WTC11 (cell line): ENCODE measurements at regions of chr15 and their contacts with region 1.

Region 1: DNA sequence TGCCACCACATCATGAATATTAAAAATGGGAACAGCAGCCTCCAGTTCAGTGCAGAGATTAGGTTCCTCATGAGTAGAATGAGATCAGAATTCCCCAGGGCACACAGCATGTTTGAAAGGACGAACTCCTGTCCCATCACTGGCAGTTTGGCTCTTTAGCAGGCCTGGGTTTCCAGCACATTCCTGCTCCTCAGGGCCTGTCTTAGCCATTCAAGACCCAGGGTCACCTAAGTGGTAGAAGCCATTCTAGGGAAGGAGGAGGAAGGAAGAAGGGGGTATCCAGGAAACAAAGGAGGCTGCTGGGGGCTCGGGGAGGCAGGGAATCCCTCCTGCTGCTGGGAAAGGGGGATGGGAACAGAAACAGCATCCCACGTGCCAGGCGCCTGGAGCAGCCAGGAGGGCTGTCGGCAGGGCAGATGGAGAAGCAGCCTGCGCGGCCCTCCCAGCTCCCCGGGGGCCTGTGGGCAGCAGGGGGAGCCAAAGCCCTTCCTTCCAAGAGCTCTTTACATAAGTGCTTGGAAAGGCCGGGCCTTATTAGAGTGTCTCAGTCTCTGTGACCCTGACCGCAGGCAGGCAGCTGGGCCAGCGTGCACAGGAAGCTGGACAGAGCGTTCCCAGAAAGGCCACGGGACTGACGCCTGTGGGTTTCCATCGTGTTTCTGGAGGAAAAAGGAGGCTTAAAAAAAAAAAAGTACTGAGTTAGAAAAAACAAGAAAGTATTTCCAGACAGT is 24.7 kb downstream of the LOXL1 start:
- DNase-seq: peak; percentile 91
- ATAC-seq: peak; percentile 93
- H3K4me3 Mint-ChIP-seq: no peak overlapping the region
- H3K27ac Mint-ChIP-seq: peak overlapping the region; percentile 97
- H3K4me1 Mint-ChIP-seq: peaks cover 10% of the 10 kb centered on the region
- H3K27me3 Mint-ChIP-seq: peaks cover 3% of the 10 kb centered on the region; the same call in 1 of the 2 replicates
- CTCF ChIP-seq: peak; percentile 37; the same call in 1 of the 2 replicates

Region 2: DNA sequence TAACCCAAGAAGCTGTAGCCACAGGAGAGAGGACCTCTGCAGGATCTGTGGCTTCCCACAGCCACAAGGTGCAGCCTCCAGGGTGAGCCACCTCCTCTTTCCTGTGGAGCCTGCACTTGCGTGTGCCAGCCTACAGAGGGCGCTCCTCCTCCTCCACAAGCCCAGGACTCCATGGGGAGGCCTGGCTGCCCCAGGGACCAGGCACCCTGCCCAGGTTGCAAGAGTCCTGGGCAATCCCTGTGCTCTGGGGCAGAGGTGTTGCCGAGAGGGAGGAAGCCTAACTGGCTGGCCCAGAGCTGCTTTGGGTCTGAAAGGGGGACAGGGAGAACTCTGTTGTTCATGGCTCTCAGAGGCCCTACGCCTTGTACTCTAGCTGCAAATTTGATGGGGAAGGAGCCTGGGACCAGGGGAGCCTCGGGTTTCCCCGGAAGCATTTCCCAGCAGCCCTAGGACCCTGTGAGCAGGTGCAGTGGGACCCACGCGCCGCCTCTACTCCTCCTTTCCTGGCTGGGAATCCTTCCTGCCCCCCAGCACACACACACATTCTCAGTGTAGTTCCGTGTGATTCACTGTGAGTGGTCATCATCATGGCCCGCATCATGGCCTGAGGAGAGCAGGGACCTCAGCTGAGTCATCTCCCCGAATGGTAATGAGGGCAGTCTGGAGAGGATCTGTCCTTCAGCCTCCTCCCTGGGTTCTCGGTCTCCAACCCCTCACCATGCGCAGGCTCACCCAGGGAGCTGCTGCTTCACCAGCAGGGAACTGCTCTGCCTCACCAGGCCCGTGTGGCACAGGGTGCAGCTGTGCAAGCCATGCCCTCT is 53.3 kb before region 1 on chr15:
- CTCF ChIA-PET with region 1: interaction called, 11 read pairs
- POLR2A ChIA-PET with region 1: no interaction called
- DNase-seq: peak; percentile 78
- ATAC-seq: peak; percentile 92
- H3K4me3 Mint-ChIP-seq: no peak overlapping the region
- H3K27ac Mint-ChIP-seq: no peak overlapping the region
- H3K4me1 Mint-ChIP-seq: peaks cover 14% of the 10 kb centered on the region
- H3K27me3 Mint-ChIP-seq: no peaks in the 10 kb centered on the region
- CTCF ChIP-seq: peak; percentile 99

Region 3: GRCh38 chr15:73936181-73936580 is 14.8 kb before region 1 on chr15:
- CTCF ChIA-PET with region 1: interaction called, 15 read pairs
- POLR2A ChIA-PET with region 1: interaction called, 3 read pairs
- DNase-seq: no peak
- ATAC-seq: peak; percentile 33; the same call in 1 of the 2 replicates
- H3K4me3 Mint-ChIP-seq: no peak overlapping the region
- H3K27ac Mint-ChIP-seq: no peak overlapping the region
- H3K4me1 Mint-ChIP-seq: peaks cover 14% of the 10 kb centered on the region
- H3K27me3 Mint-ChIP-seq: no peaks in the 10 kb centered on the region
- CTCF ChIP-seq: no peak

Region 4: DNA sequence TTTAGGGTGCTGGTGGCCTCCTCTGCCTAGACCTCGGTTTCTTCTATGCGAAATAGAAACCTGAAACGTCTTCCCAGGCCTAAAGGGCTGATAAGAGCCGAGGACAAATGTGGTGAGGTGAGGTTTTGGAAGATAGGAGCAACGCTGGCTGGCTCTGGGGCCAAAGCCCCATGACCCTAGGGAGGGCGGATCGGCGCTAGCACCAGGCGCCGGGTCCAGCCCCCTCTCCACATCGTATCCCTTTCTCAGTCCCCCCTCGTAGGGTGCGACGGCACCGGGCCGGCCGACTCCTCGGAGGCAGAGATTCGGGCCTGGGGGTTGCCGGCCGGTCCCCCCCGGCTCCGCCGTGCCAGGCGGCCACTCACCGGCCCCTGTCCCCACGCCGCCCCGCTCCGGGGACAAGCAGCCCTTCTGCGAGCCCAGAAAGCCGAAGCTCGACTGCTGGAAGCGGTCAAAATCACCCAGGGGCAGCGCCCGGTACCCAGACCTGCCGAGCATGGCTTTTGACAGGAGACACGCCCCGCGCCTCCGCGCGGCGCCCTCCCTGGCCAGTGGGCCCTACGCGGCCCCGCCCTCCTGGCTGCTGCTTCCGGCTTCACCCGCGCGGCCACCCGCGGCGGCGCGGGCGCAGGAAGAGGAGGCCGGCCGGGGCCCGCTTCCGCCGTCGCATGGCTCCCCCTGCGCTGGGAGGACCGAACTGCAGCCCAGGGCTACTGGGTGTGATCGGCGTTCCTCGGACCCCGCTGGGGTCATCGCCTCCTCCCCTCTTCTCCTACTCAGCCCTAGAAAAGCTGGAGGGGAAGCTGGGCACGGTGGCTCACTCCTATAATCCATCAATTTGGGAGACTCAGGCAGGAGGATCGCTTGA is 41.0 kb after region 1 on chr15 and contains the start of gene STOML1:
- CTCF ChIA-PET with region 1: interaction called, 17 read pairs
- POLR2A ChIA-PET with region 1: no interaction called
- DNase-seq: peak; percentile 97
- ATAC-seq: peak; percentile 68
- H3K4me3 Mint-ChIP-seq: peak within 1 kb of the TSS; percentile 74
- H3K27ac Mint-ChIP-seq: no peak within 1 kb of the TSS
- H3K4me1 Mint-ChIP-seq: peaks cover 30% of the 10 kb centered on the region
- H3K27me3 Mint-ChIP-seq: peaks cover 13% of the 10 kb centered on the region
- CTCF ChIP-seq: peak; percentile 81
- total RNA-seq, gene STOML1: 5.0 to 5.5 TPM (median 5.4 TPM) in 3 replicates

Region 5: DNA sequence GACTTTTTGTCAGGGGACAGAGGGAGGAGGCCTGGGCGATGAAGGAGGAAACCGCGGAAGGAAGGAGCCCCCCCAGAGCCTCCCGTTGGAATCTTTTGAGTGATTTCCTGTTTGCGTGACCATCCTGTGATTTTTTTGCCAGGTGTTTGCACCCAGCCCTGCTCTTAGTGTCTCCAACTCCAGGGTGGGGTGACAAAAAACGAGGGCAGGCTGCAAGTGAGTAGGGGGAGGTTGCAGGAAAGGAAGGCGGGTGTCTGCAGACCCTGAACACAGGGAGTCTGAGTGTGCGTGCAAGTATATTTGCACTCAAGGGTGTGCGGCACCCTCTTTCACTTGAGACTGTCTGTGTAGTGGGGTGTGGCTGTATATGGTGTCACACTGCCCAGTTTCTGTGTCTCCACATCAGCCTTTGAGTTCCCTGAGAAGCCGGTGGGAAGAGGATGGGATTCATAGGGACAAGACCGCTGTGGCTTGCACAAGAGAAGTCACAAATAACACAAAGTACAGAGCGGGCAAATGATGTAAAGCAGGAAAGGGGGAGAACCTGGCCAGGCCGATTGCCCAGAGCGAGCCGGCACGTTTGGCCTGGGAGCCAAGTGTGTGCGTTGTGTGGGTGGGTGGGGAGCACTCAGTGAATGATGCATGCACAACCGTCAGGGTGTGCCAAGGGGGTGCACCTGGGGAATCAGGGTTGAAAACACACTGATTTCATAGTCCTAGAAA is 186.0 kb after region 1 on chr15:
- CTCF ChIA-PET with region 1: no interaction called
- POLR2A ChIA-PET with region 1: no interaction called
- DNase-seq: no peak
- ATAC-seq: no peak
- H3K4me3 Mint-ChIP-seq: peak overlapping the region; percentile 67
- H3K27ac Mint-ChIP-seq: no peak overlapping the region
- H3K4me1 Mint-ChIP-seq: peaks cover 68% of the 10 kb centered on the region
- H3K27me3 Mint-ChIP-seq: peaks cover 74% of the 10 kb centered on the region
- CTCF ChIP-seq: no peak